Mammary epithelial cell (primary cell): ENCODE measurements at regions of chr1 and their contacts with region 1.

Region 1: GRCh38 chr1:111720274-111720976 is 18.8 kb downstream of the INKA2 start:
- DNase-seq: no peak
- H3K4me3 ChIP-seq: no peak overlapping the region
- H3K27ac ChIP-seq: no peak overlapping the region
- H3K4me1 ChIP-seq: peaks cover 23% of the 10 kb centered on the region
- H3K27me3 ChIP-seq: no peaks in the 10 kb centered on the region
- CTCF ChIP-seq: no peak

Region 2: GRCh38 chr1:111739194-111739924 is 18.9 kb after region 1 on chr1 and contains the start of gene INKA2:
- CTCF ChIA-PET with region 1: interaction called, 3 read pairs
- dilution Hi-C with region 1: no loop called
- in situ Hi-C with region 1: no loop called
- intact Hi-C with region 1: loop called (anchors 1 kb)
- DNase-seq: peak; percentile 92
- H3K4me3 ChIP-seq: peak within 1 kb of the TSS; percentile 51 to 74 (median 68)
- H3K27ac ChIP-seq: peak within 1 kb of the TSS; percentile 71
- H3K4me1 ChIP-seq: peaks cover 23% of the 10 kb centered on the region
- H3K27me3 ChIP-seq: no peaks in the 10 kb centered on the region
- CTCF ChIP-seq: no peak
- total RNA-seq, gene INKA2: 4.2 to 8.9 TPM

Region 3: DNA sequence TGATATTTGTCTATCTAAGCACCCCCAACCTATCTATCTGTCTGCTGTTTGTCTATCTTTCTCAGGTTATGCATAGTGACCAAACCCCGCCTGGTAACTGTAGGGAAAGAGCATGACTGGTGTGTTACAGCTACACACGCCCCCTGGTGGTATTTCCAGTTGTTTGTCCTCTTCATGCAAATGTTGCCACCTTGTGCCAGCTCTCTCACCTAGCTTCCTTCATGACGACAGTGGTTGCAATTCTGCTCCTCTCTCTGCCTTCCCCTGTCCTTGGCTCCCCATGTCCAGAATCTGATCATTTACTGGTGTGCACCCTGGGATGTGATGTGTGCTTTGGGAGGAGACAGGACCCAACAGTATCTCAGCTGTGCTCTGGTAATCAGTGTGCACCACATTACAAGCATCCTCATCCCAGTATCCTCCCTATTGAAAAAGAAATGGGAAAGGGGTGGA is 26.9 kb after region 1 on chr1:
- CTCF ChIA-PET with region 1: interaction called, 3 read pairs
- dilution Hi-C with region 1: no loop called
- in situ Hi-C with region 1: loop called in 1 of 2 experiments (anchors 5 kb)
- intact Hi-C with region 1: loop called (anchors 1 kb)
- DNase-seq: peak; percentile 65
- H3K4me3 ChIP-seq: no peak overlapping the region
- H3K27ac ChIP-seq: no peak overlapping the region
- H3K4me1 ChIP-seq: no peaks in the 10 kb centered on the region
- H3K27me3 ChIP-seq: no peaks in the 10 kb centered on the region
- CTCF ChIP-seq: peak; percentile 74 to 81

Region 4: DNA sequence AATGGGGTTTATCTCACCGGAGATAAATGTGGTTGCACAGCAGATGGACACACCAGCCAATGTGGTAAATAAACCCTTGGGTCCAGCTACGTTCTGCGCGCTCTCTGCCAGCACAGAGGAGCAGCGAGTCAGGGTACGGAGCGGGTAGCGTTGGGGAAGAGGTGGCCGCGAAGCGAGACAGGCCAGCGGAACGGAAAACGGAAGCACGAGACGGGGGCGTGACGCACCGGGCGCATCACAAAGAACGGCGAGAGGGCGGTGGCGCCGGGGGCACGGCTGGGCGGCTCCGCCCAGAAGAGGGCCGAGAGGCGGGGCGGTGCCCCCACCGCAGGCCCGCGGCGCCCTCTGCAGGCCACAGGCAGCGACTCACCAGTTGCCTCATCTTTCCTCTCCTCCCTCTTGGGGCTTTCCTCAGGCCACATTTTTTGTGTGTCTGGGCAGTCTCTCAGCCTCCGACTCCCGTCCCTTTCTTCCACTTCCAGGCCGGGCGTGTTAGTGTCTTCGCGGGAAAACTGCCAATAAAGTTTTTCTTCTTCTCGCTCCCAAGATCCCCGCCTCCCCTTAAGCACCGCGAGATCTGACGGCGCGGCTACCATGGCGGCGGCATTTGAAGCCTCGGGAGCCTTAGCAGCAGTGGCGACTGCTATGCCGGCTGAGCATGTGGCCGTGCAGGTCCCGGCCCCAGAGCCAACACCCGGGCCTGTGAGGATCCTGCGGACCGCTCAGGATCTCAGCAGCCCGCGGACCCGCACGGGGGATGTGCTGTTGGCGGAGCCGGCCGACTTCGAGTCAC is 35.1 kb after region 1 on chr1 and contains the start of gene DDX20:
- CTCF ChIA-PET with region 1: no interaction called
- dilution Hi-C with region 1: no loop called
- in situ Hi-C with region 1: loop called in 1 of 2 experiments (anchors 5 kb)
- intact Hi-C with region 1: loop called (anchors 1 kb)
- DNase-seq: peak; percentile 95
- H3K4me3 ChIP-seq: peak within 1 kb of the TSS; percentile 65 to 99 (median 71)
- H3K27ac ChIP-seq: peak within 1 kb of the TSS; percentile 81
- H3K4me1 ChIP-seq: peaks cover 18% of the 10 kb centered on the region
- H3K27me3 ChIP-seq: no peaks in the 10 kb centered on the region
- CTCF ChIP-seq: peak; percentile 66 to 81
- total RNA-seq, gene DDX20: 12.9 to 17.2 TPM